Heart right ventricle (tissue), 16 donors: ENCODE measurements at regions of chr9 and their contacts with region 1.

Region 1: DNA sequence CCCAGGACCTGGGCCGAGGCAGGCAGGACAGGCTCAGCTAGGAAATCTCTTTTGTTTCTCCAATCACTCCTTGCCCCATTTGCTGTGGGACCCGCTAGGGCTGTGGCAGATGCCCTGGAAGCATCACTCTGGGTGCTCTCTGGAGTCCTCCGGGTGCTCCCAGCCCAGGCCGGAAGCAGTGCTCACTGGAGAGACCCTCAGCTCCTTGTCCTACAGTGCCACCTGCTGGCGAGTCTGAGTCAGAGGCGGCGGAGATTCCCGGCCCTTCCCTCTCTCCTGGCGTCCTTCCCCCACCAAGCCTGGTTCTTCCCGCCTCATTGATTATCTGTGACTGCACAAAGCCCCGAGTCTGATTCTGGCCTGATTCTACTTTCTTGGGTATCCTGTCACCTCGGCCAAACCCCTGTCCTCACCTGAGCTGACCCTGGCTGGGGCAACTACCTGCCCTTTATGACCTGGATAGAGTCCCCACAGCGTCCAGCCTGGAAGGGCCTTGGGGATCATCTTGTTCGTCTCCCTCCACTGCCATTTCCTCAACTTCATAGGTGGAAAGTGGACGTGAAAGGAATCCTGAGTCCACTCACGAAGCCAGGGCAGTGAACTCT is 7.3 kb upstream of the BARHL1 start:
- DNase-seq: peak; percentile 67 to 71
- ATAC-seq: peak; percentile 51 to 89 (median 86)
- H3K4me3 ChIP-seq: no peak overlapping the region
- H3K27ac ChIP-seq: no peak overlapping the region
- H3K4me1 ChIP-seq: peaks cover 0 to 5% (median 0%) of the 10 kb centered on the region in 9 donors
- H3K27me3 ChIP-seq: peaks cover 14 to 71% (median 62%) of the 10 kb centered on the region in 7 donors
- CTCF ChIP-seq: peak; percentile 45 to 85 (median 77)

Region 2: DNA sequence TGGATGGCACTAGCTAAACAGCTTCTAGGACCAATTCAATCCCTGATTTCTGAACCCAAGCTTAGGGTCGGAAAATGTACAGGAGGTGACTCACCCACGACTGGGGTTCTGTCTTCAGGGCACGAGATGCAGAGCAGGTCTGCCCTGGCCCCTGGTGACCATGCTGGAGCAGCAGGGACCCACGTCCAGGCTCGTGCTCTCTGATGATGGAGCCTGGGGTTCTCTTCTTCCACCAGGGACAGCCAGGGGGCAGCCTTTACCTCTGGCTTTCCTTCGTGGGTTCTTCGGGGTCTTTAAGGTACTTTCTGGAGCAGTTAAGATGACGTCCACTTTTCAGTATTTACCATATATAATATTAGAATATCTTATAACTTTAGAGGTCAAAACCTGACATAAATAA is 163.0 kb before region 1 on chr9:
- intact Hi-C with region 1: loop called (anchors 1 to 5 kb)
- DNase-seq: no peak
- ATAC-seq: no peak
- H3K4me3 ChIP-seq: no peak overlapping the region
- H3K27ac ChIP-seq: no peak overlapping the region
- H3K4me1 ChIP-seq: peaks cover 7 to 41% (median 28%) of the 10 kb centered on the region in 9 donors
- H3K27me3 ChIP-seq: peaks cover 0 to 78% (median 56%) of the 10 kb centered on the region in 7 donors
- CTCF ChIP-seq: peak in 8 of 9 donors; percentile 8 to 67 (median 52)

Region 3: DNA sequence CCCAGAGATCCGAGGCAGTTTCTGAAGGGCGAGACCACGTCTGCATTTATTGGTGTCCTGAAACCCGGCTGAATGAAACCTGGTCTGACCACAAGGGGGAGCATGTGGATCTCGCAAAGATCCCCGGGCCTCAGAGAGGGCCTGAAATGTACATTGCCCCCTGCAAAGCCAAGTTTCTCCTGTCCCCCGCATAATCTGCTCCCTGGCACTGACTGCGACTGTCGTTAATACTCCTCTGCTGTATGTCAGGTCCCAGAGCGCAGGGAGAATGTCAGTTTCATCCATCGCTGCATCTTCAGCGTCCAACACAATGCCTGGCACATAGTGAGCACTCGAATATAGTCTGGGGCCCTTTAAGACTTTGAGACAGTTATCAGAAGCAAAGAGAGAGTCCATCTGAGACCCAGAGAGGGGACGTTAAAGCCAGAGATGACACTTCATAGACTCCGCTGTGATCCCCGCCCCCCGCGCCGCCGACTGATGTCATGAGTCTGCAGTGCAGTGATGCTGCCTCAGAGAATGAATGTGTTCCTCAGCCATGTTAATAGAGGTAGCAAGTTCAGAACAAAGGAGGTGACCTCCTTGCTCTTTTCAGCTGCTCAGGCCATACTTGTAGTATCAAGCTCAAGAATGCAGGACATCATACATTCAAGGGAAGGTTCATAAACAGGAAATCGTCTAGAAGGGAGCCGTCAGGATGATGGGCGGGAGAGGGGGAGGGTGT is 67.2 kb before region 1 on chr9:
- intact Hi-C with region 1: loop called (anchors 1 to 5 kb)
- DNase-seq: peak; percentile 37 to 62
- ATAC-seq: peak in 6 of 8 donors; percentile 43 to 76 (median 62)
- H3K4me3 ChIP-seq: no peak overlapping the region
- H3K27ac ChIP-seq: no peak overlapping the region
- H3K4me1 ChIP-seq: peaks cover 0 to 11% (median 0%) of the 10 kb centered on the region in 9 donors
- H3K27me3 ChIP-seq: peaks cover 0 to 59% (median 31%) of the 10 kb centered on the region in 7 donors
- CTCF ChIP-seq: peak; percentile 57 to 87 (median 77)

Region 4: DNA sequence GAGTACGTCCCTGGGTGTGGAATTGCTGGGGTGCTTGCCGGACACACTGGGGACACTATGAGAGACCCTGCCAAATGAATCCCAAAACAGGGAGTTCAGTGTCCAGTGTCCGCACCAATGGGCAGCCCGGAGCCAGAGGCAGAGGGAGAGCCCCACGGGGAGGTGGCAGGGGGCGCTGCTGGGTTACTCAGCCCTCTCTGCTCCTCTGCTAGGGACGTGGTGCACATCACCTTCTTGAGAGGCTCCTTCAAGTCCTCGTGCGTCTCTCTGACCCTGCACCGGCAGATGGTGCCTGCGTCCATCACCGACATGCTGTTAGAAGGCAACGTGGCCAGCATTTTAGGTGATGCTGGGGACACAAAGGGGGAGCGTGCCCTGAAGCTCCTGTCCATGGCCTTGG is 821.8 kb after region 1 on chr9:
- intact Hi-C with region 1: no loop called
- DNase-seq: no peak
- ATAC-seq: peak in 2 of 8 donors; percentile 22 to 25
- H3K4me3 ChIP-seq: no peak overlapping the region
- H3K27ac ChIP-seq: no peak overlapping the region
- H3K4me1 ChIP-seq: no peaks in the 10 kb centered on the region
- H3K27me3 ChIP-seq: peaks cover 0 to 30% (median 5%) of the 10 kb centered on the region in 7 donors
- CTCF ChIP-seq: peak in 2 of 9 donors; percentile 24 to 39